AG04450 (cell line): ENCODE measurements at regions of chr11 and their contacts with region 1.

Region 1: DNA sequence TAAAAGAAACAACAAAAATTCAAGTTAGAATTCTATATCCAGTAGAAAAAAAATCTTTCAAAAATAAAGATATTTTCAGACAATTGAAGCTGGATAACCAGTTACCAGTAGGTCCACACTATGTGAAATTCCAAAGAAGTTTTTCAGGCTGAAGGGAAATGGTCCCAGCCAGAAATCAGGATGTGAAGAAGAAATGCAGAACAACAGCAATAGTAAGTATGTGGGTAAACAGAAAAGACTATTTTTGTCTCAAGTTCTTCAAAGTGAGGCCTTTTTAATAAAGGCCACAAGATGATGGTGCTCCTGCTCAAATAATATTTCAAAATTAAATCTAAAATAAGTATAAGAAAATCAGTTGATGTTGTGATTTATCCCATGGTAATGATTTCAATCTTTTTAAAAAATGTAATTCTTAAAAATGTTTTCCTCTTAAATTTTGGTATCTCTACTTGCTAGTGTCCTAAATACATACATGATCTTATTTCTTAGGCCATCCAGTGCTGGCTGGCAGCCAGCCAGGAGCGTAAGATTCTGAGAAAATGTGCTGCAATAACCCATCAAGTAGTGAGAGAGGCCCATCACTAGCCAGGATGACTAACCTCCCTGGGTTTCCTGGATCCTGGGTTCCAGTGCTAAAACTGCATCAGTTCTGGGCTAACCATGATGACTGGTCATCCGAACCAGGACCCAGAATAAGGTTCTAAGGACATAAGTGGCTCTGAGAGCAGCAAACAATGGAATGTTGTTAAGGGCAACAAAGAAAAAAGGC is 15.6 kb upstream of the UCP3 start:
- DNase-seq: peak; percentile 59
- H3K4me3 ChIP-seq: no peak overlapping the region
- H3K27ac ChIP-seq: no peak overlapping the region
- H3K27me3 ChIP-seq: no peaks in the 10 kb centered on the region
- CTCF ChIP-seq: no peak

Region 2: GRCh38 chr11:74037309-74037708 is 12.9 kb after region 1 on chr11:
- CTCF ChIA-PET with region 1: no interaction called
- POLR2A ChIA-PET with region 1: no interaction called
- DNase-seq: no peak
- H3K4me3 ChIP-seq: no peak overlapping the region
- H3K27ac ChIP-seq: no peak overlapping the region
- H3K27me3 ChIP-seq: no peaks in the 10 kb centered on the region
- CTCF ChIP-seq: no peak

Region 3: GRCh38 chr11:74123008-74123448 is 98.6 kb after region 1 on chr11:
- CTCF ChIA-PET with region 1: no interaction called
- POLR2A ChIA-PET with region 1: interaction called, 10 read pairs
- DNase-seq: no peak
- H3K4me3 ChIP-seq: no peak overlapping the region
- H3K27ac ChIP-seq: no peak overlapping the region
- H3K27me3 ChIP-seq: no peaks in the 10 kb centered on the region
- CTCF ChIP-seq: peak; percentile 35